ENCODE measurements at regions of chr1 and their contacts with region 1.

Region 1: GRCh38 chr1:203625628-203626019 is 1.0 kb upstream of the ATP2B4 start:
- DNase-seq: peak in 1 of 2 experiments; percentile 53
- H3K4me3 ChIP-seq: no peak overlapping the region
- H3K27ac ChIP-seq: peak overlapping the region; percentile 62
- H3K4me1 ChIP-seq: peaks cover 34% of the 10 kb centered on the region
- H3K27me3 ChIP-seq: no peaks in the 10 kb centered on the region
- CTCF ChIP-seq: no peak; the same call in 1 of the 2 replicates

Region 2: GRCh38 chr1:203504397-203505250 is 121.0 kb before region 1 on chr1:
- CTCF ChIA-PET with region 1: interaction called, 3 read pairs
- POLR2A ChIA-PET with region 1: interaction called, 3 read pairs
- intact Hi-C with region 1: loop called (anchors 1 kb)
- DNase-seq: peak; percentile 65 to 78
- H3K4me3 ChIP-seq: no peak overlapping the region
- H3K27ac ChIP-seq: no peak overlapping the region
- H3K4me1 ChIP-seq: peaks cover 15% of the 10 kb centered on the region
- H3K27me3 ChIP-seq: no peaks in the 10 kb centered on the region
- CTCF ChIP-seq: peak; percentile 95

Region 3: DNA sequence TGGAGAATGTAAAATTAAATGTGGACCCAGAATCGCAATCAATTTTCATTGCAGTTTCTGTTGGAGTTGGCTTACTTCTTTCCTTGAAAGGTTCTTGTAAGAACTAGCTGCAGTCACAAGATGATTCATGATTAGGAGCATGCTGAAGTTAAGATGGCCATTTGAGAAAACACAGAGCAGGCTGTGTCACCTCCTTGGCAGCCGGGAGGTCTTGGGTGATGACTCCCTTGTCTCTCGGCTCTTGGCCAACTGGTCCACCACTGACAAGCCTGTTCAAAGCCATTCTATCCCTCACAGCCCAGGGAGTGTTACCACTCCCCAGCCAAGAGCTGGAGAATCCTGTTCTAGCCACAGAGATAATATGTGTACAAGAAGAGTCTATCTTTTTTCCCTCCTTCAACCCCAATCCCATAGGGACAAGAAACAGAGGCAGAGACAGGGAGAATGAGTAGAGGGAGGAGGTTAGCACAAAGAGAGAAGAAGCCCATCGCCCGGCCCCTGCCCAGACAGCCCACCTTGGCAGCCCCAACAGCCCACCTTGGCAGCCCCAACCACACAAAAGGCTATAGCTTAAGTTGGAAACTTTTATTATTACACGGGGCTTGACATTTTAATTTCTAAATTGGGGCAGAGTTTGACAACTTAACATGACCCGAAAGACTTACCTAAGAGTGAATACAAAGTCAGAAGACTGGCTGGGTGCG is 90.9 kb before region 1 on chr1:
- CTCF ChIA-PET with region 1: no interaction called
- POLR2A ChIA-PET with region 1: no interaction called
- intact Hi-C with region 1: loop called (anchors 5 kb)
- DNase-seq: peak; percentile 81 to 95
- H3K4me3 ChIP-seq: no peak overlapping the region
- H3K27ac ChIP-seq: peak overlapping the region; percentile 93
- H3K4me1 ChIP-seq: peaks cover 74% of the 10 kb centered on the region
- H3K27me3 ChIP-seq: no peaks in the 10 kb centered on the region
- CTCF ChIP-seq: no peak

Region 4: GRCh38 chr1:203612932-203613682 is 12.5 kb before region 1 on chr1:
- CTCF ChIA-PET with region 1: interaction called, 5 read pairs
- POLR2A ChIA-PET with region 1: interaction called, 10 read pairs
- intact Hi-C with region 1: no loop called
- DNase-seq: no peak
- H3K4me3 ChIP-seq: no peak overlapping the region
- H3K27ac ChIP-seq: no peak overlapping the region
- H3K4me1 ChIP-seq: no peaks in the 10 kb centered on the region
- H3K27me3 ChIP-seq: no peaks in the 10 kb centered on the region
- CTCF ChIP-seq: no peak

Region 5: DNA sequence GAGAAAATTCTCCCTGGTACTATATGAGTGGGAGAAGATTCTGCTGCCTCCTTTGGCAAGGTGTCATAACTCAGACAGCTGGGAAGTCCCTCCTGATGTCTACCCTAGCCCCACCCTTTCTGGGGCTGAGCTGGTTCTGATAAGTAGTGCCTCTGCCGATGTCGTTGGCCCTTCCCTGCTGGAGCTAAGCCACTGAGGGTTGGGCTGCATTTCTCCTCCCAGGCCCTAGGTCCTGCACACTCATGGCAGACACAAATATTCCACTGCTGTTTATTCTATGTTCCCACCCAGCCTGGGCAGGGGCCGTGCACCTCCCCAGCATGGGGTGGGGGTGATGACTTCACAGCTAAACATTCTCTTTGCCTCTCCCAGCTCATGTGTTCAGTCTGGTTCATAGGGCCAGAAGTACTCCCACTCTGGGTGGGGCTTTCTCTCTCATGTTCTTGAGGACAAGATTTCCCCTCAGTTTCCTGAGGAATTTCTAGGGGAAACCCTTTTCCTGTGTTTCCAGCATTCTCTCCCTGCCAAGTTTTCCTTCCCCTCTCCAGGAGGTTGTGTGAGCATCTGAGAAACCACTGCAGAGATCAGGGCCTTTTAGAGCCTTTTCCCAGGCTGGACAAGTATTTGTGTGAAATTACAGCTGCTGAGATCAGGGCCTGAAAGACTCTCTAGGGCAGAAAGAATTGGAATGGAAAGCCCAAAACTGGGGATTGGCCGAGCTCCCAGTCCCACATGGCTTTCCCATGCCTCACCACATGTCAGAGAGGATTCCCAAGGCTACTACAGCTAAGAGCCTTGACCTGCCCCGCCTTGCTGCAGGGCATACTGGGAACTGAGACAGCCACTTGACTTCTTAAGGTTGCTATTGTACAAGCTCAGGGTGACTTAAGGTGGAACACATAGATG is 67.2 kb after region 1 on chr1:
- CTCF ChIA-PET with region 1: interaction called, 3 read pairs
- POLR2A ChIA-PET with region 1: interaction called, 11 read pairs
- intact Hi-C with region 1: loop called (anchors 1 kb)
- DNase-seq: peak; percentile 79 to 80
- H3K4me3 ChIP-seq: no peak overlapping the region
- H3K27ac ChIP-seq: peak overlapping the region; percentile 80
- H3K4me1 ChIP-seq: peaks cover 17% of the 10 kb centered on the region
- H3K27me3 ChIP-seq: no peaks in the 10 kb centered on the region
- CTCF ChIP-seq: no peak

Region 6: GRCh38 chr1:203878422-203878821 is 252.8 kb after region 1 on chr1:
- CTCF ChIA-PET with region 1: no interaction called
- POLR2A ChIA-PET with region 1: no interaction called
- intact Hi-C with region 1: no loop called
- DNase-seq: no peak
- H3K4me3 ChIP-seq: no peak overlapping the region
- H3K27ac ChIP-seq: no peak overlapping the region
- H3K4me1 ChIP-seq: no peaks in the 10 kb centered on the region
- H3K27me3 ChIP-seq: no peaks in the 10 kb centered on the region
- CTCF ChIP-seq: no peak

Region 7: DNA sequence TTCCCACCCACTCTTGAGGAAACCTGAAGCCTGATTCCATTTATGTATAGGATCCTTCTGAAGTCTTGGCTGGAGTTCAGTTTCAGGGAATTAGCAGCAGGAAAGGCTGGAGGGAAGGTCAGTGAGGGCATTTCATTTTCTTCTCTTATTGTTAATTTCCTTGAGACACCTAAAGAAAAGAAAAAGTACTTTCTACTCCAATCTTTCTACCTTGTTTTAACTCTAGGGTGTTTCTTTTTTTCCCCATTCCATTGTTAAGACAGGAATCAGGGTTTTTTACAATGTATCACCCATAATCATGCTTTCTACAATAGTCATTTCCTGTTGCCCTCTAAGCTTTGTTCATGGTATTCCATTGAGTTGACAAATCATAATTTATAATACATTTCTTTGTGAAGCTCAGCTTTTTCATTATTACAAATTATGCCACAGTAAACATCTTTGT is 263.2 kb after region 1 on chr1:
- CTCF ChIA-PET with region 1: no interaction called
- POLR2A ChIA-PET with region 1: no interaction called
- intact Hi-C with region 1: no loop called
- DNase-seq: peak; percentile 14 to 87
- H3K4me3 ChIP-seq: no peak overlapping the region; the same call in 1 of the 2 replicates
- H3K27ac ChIP-seq: peak overlapping the region; percentile 89
- H3K4me1 ChIP-seq: peaks cover 34% of the 10 kb centered on the region
- H3K27me3 ChIP-seq: no peaks in the 10 kb centered on the region
- CTCF ChIP-seq: no peak